ENCODE measurements at regions of chr4 and their contacts with region 1.

Region 1: DNA sequence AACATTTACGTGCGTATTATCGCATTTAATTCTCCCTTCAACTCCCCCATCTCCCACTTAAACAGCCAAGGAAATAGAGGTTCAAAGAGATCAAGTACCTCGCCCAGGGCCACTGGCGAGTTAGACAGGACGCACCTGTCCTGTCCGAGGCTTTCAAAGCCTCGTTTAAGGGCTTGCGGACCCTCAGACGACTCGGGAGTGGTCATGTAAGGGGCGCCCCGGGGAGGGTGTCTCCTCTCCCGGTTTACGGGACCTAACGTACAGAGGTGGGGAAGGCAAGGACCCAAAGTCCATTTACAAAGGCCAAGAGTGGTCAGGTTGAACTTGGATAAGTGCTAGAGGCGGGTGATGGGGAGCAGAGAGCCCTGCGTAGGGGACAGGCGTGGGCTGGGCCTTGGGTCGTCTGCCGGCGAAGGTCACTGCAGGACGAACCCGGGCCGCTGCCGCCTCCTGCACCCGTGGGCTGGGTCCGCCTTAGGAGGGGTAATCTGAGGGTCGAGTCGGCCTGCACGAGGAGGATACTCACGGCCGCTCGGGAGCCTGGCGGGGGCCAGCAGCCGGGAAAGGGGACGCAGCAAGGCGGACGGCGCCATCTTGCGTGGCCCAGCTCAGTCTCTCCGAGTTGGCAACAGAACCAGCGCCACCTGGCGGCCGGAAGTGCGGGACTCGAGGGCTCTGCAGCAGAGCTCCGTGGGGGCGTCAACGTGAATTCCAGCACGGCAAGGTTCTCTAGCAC is 5.9 kb upstream of the NAA15 start:
- DNase-seq: peak; percentile 84
- H3K4me3 ChIP-seq: peak overlapping the region; percentile 82
- H3K27ac ChIP-seq: peak overlapping the region; percentile 47
- H3K27me3 ChIP-seq: no peaks in the 10 kb centered on the region
- CTCF ChIP-seq: peak; percentile 92

Region 2: DNA sequence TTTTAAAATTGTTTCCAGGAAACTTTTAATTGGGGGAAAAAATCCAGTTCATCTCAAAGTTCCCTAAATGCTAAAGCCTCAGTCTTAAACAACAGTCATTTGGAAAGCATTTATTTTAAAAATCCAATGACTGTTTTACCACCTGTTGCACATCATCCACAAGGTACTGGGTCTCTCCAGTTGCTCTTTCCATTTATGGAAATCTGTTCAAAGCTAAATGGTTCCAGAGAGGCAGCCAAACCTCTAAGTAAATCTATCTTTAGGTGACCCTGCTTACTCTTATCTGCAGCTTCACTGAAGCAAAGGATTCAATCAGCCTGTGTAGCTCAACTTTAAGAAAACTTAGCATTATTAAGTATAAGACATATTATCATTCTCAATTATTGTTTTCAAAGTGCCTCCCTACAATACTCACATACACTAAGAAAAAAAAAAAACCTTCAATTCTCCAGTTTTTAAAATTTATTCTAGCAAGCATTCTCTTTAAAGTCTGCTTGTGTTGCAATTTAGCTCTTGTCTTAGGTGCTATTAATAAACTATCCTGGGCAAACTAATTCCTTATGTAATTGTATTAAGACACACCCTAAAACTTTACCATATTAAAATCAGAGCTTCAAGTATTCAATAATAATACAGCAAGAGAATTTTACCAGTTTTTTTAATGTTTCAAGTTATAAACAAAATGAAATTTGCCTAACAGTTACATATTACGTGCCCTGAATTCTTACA is 219.2 kb before region 1 on chr4:
- CTCF ChIA-PET with region 1: interaction called, 10 read pairs
- POLR2A ChIA-PET with region 1: interaction called, 4 read pairs
- DNase-seq: no peak
- H3K4me3 ChIP-seq: no peak overlapping the region
- H3K27ac ChIP-seq: no peak overlapping the region
- H3K27me3 ChIP-seq: no peaks in the 10 kb centered on the region
- CTCF ChIP-seq: no peak

Region 3: DNA sequence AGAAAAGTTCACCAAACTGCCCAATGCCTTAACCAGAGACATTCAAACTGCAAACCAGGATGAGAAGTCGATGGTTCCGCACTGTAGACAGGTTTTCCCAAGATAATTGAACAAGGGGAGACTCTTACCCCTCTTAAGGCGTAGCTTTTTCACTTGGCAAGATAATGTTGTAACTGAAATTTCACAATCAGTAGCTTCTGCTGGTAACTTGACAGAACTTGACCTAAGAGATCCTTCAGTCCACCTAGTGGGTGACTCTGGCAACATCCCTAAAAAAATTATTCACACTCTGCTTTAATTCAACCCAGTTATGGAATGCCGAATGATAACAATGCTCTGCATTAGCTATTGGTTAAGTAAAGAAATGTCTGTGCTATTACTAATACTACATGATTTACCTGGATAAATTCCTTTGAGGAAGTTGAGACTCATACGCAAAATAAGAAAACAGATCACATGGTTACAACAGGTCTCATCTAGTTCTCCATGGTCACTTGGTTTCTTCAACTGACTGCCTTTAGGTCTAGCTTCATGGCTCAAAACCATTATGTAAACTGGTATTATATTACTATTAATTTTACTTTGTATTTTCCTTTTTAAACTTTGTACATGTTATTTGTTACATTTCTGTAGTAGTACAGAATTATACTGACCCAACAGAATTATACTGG is 127.5 kb before region 1 on chr4:
- CTCF ChIA-PET with region 1: interaction called, 14 read pairs
- POLR2A ChIA-PET with region 1: interaction called, 4 read pairs
- DNase-seq: no peak
- H3K4me3 ChIP-seq: no peak overlapping the region
- H3K27ac ChIP-seq: no peak overlapping the region
- H3K27me3 ChIP-seq: no peaks in the 10 kb centered on the region
- CTCF ChIP-seq: peak; percentile 58

Region 4: DNA sequence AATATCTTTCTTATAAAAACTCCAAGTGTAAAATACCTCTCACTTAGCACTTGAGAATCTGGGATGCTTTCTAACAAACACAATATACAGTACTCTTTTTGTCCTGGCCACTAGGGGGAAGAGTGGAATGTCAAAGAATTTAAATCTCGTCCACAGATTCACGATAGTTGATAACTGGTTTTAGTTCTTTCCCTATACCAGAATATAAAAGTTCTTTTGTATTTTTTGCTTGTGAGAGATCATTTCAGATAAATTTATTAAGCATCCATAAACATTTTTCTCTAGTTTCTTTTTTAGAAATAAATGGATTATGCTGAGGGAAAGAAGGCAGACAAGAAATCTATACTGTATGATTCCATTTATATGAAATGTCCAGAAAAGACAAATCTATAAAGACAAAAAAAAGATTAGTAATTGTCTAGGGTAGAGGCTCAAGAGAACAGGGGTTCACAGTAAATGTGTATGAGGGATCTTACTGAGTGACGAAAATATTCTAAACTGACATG is 65.8 kb before region 1 on chr4:
- CTCF ChIA-PET with region 1: interaction called, 21 read pairs
- POLR2A ChIA-PET with region 1: interaction called, 3 read pairs
- DNase-seq: no peak
- H3K4me3 ChIP-seq: no peak overlapping the region
- H3K27ac ChIP-seq: no peak overlapping the region
- H3K27me3 ChIP-seq: no peaks in the 10 kb centered on the region
- CTCF ChIP-seq: peak; percentile 73

Region 5: DNA sequence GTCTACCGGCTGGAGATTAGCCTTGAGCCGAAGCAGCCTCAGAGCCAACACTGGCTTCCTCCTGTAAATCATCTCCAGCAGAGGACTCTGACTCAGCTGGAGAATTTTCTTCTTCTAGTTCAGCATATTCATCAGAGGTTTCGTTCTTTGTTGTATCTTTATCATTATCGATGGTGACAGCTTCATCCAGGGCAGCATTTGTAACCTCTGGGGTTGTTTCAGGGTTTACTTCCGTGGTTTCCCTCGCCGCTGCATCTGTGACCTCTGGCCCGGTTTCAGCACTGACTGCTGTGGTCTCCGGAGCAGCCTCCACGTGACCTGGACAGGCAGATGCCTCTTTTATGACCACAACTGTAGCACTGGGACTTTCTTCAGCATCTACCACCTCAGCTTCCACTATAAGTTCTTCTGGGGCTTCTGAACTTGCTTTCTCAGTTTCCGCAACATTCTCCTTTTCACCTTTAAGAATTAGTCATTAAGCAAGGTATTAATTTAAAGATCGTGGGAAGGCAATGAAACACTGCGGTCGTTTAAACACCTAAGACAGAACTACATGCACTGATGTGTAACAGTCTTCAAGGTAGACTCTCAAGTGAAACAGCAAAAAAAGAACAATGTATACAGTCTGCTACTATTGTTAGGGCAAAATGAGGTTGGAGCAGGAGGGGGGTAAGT is 28.7 kb before region 1 on chr4:
- CTCF ChIA-PET with region 1: interaction called, 17 read pairs
- POLR2A ChIA-PET with region 1: interaction called, 6 read pairs
- DNase-seq: no peak
- H3K4me3 ChIP-seq: peak overlapping the region; percentile 38
- H3K27ac ChIP-seq: peak overlapping the region; percentile 43
- H3K27me3 ChIP-seq: no peaks in the 10 kb centered on the region
- CTCF ChIP-seq: no peak

Region 6: DNA sequence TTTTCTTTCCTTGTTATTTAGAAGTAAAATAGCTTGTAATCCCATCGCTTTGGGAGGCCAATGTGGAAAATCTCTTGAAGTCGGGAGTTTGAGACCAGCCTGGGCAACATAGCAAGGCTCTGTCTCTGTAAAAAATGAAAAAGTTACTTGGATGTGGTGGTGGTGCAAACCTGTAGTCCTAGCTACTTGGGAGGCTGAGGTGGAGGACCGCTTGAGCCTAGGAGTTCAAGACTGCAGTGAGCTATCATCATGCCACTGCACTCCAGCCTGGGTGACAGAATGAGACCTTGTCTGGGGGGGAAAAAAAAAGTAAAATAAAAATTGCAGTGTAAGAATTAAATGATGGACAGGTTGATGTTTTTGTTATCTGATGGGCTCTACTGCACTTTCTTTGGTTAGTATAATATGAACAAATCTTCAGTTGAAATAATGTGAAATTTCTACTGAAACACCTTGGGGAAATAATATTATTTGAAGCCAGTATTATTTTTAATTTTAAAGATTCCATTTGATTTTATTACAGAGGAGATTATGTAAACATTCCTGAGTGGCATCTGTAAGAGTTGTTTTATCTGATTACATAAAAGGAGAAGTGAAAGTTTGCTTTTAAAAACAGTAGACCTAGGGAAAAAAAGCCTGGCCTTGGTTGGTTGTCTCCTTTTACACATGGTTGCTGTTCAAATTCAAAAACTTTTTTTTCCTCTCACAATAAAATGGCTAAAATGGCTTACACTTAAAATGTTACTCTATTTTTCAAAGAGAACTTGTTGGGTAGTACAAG is 17.4 kb after region 1 on chr4:
- CTCF ChIA-PET with region 1: interaction called, 10 read pairs
- POLR2A ChIA-PET with region 1: no interaction called
- DNase-seq: no peak
- H3K4me3 ChIP-seq: no peak overlapping the region
- H3K27ac ChIP-seq: no peak overlapping the region
- H3K27me3 ChIP-seq: no peaks in the 10 kb centered on the region
- CTCF ChIP-seq: no peak

Region 7: DNA sequence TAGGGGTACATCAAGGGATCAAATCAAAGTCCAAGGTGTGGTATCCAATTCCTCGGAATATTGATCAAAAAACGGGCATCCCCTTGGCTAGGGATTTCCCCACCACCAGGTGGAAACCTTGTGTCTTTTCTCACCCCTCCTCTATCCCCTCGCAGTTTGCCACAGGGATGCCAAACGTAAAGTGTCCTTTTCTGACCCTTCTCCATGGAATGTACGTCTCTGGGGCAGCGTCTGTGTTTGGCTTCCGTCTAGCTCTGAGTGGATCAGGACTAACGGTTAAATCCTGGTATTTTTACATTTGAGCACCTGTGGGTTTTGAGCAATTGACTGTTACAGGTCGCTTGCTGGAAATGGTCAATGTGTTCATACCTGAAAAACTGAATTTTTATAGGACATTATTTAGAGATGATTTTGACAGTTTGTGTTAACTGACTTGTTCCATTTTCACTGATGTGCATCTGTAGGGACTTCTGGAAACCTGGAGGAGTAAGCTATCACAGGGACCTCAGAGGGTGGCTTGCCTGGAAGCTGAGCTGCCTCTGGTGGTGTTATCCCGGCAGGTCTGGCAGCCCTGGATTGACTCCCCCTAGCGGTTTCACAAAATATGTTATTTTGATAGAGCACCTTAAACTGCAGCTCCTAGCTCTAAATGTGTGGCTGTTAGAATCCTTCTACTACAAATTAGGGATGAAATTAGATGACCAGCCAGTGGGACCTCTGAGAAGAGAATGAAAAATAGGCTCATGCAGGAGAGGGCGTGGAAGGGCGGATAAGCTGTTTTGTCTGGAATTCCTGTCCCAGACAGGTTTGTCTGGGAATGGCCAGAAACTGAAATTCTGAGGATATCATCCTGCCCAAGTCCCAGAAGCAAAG is 361.5 kb after region 1 on chr4:
- CTCF ChIA-PET with region 1: no interaction called
- POLR2A ChIA-PET with region 1: no interaction called
- DNase-seq: peak; percentile 51
- H3K4me3 ChIP-seq: no peak overlapping the region
- H3K27ac ChIP-seq: no peak overlapping the region
- H3K27me3 ChIP-seq: no peaks in the 10 kb centered on the region
- CTCF ChIP-seq: peak; percentile 92